ENCODE measurements at regions of chr7 and their contacts with region 1.

Region 1: DNA sequence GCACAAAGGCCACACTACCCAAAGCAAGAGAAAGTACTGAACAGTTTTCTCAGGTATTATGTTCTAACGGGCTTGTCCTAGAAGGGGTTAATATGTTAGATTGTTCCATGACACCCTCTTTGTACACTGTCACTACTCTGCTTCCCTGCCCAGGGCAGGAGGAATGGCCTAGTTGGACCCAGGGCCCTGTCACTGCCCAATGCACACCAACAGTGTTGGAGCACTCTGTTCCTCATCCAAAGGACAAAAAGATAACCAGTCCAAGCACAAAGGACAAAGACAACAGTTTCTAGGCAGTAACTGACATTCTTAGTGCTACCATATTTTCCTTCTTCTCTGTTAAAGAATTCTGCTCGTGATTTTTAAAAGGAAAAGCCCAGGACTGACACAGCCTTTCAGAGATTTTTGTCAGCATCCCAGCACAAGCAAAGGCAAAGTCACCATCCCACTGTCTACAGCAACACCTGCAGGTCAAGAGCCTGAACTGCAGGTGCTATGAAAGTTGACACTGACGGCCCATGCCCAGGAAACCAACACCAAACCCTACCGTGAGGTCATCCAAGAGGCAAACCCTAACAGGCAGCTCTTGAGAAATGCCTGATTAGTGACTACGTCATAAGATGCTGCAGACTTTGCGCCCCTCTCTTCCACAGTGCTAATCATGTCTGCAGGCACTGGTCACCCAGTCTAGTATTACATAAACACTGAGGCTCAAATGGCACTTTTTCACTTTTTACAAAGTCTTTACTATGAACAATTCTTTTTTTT is 13.2 kb downstream of the NUDCD3 start:
- DNase-seq: peak; percentile 83
- ATAC-seq: peak; percentile 77
- H3K4me3 ChIP-seq: no peak overlapping the region
- H3K27ac ChIP-seq: no peak overlapping the region
- H3K4me1 ChIP-seq: peaks cover 26% of the 10 kb centered on the region
- H3K27me3 ChIP-seq: no peaks in the 10 kb centered on the region
- CTCF ChIP-seq: peak; percentile 92

Region 2: DNA sequence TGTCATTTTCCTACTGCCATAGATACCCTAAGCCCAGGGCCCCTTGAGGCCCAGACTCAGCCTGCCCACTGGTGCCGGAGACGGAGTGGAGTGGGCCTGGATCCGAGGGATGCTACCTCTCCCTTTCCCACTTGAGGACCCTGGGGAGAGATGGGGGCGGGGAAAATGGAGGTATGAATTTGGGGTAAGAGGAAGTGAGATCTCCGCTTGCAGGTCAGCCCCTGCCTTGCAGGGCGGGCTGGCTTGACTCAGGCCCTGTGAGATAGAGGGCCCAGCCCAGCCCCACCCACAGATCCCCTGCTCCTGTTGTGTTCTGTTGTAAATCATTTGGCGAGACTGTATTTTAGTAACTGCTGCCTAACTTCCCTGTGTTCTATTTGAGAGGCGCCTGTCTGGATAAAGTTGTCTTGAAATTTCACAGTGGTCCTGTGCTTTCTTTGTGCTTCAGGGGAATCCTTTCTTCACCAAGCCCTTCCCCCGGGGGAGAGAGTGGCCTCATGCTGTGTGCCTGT is 263.3 kb before region 1 on chr7:
- CTCF ChIA-PET with region 1: no interaction called
- POLR2A ChIA-PET with region 1: no interaction called
- intact Hi-C with region 1: loop called (anchors 1 kb)
- DNase-seq: no peak
- ATAC-seq: no peak; the same call in 1 of the 2 replicates
- H3K4me3 ChIP-seq: no peak overlapping the region
- H3K27ac ChIP-seq: no peak overlapping the region
- H3K4me1 ChIP-seq: no peaks in the 10 kb centered on the region
- H3K27me3 ChIP-seq: no peaks in the 10 kb centered on the region
- CTCF ChIP-seq: no peak

Region 3: GRCh38 chr7:44348300-44348699 is 128.9 kb before region 1 on chr7:
- CTCF ChIA-PET with region 1: no interaction called
- POLR2A ChIA-PET with region 1: no interaction called
- intact Hi-C with region 1: loop called (anchors 1 kb)
- DNase-seq: peak; percentile 50
- ATAC-seq: peak; percentile 55
- H3K4me3 ChIP-seq: no peak overlapping the region
- H3K27ac ChIP-seq: no peak overlapping the region
- H3K4me1 ChIP-seq: peaks cover 12% of the 10 kb centered on the region; the same call in 1 of the 2 replicates
- H3K27me3 ChIP-seq: no peaks in the 10 kb centered on the region
- CTCF ChIP-seq: peak; percentile 57